Activated T-helper 1 cell treated with anti-CD3 and anti-CD28 coated beads, Interleukin-12 subunit alpha, Interleukin-12 subunit beta, Interleukin-2, Interleukin-4 antibody, amounts not matched to agents 30 ng/mL and 10 ng/mL and 1 ng/mL, durations not matched to agents 14 hours and 24 hours and 36 hours (primary cell): ENCODE measurements at regions of chr21 and their contacts with region 1.

Region 1: DNA sequence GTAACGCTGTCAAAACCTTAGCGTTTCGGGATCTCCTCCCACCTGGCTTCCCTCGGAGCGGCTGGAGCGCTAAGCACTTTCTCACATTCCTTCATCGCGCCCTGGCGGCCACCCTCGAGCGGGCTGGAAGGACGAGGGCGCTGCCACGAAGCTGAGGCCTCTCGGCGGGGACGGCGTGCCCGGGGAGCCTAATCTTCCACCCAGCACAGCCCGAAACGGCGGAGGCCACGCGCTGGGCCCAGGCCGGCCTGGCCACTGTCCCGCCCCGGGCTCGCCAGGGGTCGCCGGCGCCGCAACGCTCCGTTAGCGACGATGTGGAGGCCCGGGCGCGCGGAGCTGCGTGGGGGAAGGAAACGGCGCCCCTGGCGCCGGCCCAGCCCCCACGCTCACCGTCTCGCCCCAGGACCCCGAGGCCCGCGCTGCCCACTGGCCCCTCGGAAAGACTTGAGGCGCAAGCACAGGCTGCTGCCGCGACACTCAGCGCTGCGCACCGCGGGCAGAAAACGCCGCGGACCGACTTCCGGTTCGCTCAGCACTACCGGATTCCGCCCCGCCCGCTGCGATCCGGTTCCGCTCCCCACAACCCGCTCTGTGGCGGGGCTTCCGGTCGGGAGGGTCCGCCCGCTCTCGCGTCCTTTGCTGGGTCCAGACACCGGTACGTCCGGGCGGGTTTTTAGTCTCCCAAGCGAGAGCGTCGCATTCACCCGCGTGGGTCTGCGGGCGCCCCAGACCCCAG is at the start of gene YBEY:
- DNase-seq: peak; percentile 86
- H3K4me3 Mint-ChIP-seq: peak within 1 kb of the TSS; percentile 100
- H3K27ac Mint-ChIP-seq: peak within 1 kb of the TSS; percentile 99
- H3K4me1 Mint-ChIP-seq: peaks cover 45% of the 10 kb centered on the region
- H3K27me3 Mint-ChIP-seq: no peaks in the 10 kb centered on the region
- total RNA-seq, gene YBEY: 16.7 and 17.6 TPM in 2 replicates

Region 2: DNA sequence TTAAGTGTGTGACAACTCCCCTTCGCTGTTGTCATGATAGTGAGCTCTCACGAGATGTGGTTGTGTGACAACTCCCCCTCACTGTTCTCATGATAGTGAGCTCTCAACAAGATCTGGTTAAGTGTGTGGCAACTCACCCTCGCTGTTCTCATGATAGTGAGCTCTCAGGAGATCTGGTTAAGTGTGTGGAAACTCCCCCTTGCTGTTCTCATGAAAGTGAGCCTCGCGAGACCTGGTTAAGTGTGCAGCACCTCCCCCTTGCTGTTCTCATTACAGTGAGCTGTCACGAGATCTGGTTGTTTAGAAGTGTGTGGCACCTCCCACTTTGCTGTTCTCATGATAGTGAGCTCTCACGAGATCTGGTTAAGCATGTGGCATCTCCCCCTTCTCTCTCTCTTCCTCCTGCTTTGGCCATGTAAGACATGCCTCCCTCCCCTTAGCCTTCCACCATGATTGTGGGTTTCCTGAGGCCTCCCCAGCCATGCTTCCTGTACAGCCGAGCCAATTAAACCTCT is 32.3 kb before region 1 on chr21:
- intact Hi-C with region 1: loop called (anchors 1 kb)
- DNase-seq: peak; percentile 62
- H3K4me3 Mint-ChIP-seq: peak overlapping the region; percentile 62
- H3K27ac Mint-ChIP-seq: peak overlapping the region; percentile 95
- H3K4me1 Mint-ChIP-seq: peaks cover 43% of the 10 kb centered on the region
- H3K27me3 Mint-ChIP-seq: no peaks in the 10 kb centered on the region

Region 3: GRCh38 chr21:46295996-46296752 is 10.2 kb after region 1 on chr21:
- intact Hi-C with region 1: loop called (anchors 1 kb)
- DNase-seq: peak; percentile 58
- H3K4me3 Mint-ChIP-seq: peak overlapping the region; percentile 63
- H3K27ac Mint-ChIP-seq: peak overlapping the region; percentile 83
- H3K4me1 Mint-ChIP-seq: peaks cover 11% of the 10 kb centered on the region
- H3K27me3 Mint-ChIP-seq: no peaks in the 10 kb centered on the region